ENCODE measurements at regions of chr1 and their contacts with region 1.

Region 1: DNA sequence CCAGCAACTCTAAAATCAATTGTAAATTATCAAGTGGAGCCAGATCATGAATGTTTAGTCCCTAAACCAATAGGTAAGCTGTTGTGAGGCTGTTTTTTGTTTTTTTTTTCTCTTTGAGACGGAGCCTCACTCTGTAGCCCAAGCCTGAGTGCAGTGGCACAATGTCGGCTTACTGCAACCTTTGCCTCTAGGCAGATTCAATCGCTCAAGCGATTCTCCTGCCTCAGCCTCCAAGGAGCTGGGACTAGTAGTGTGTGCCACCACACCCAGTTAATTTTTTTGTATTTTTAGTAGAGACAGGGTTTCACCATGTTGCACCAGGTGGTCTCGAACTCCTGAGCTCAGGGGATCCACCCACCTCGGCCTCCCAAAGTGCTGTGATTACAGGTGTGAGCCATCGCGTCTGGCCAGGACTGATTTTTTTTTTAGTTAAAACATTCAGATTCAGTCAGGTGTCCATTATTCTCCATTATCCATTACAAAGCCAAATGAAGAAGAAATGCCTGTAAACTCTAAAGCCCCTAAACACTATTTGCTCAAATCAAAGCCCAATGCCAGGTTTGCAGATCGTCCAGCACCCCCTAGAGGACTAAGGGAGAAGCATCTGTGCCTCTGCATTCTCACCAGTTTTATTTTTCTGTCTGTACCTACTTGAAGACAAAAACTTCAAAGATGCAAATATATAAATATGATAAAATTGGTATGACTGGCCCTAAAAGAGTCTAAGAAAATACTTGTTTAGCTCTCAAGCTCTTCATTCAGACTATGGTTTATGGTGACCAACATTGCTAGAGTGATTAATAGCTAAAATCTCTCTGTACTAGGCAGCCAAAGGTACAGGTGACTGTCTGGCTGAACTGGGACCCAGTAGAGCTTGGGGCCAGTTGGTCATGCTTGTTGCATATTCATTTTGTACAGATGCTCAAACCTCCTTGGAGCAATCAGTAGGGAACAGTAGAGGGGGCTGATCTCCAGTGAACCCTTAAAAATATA is 138.6 kb downstream of the SYT2 start:
- DNase-seq: no peak
- ATAC-seq: no peak

Region 2: DNA sequence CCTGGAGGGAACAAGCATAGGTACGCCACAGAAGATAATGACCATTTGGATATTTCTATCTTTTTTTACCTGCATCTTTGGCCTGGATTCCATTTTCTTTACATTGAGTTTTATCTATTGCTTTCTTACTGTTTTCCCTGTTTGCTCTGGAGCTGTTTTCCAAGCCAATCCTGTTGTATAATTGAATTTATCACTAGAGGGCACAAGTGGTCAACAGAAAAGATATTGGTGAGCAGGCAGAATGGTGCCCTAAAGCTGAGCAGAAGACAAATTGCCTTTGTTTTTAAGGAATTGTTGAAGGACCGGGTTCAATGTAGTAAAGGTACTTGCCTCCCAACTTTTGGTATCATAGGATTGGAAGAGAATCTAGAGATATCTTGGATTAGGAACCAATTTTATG is 70.4 kb before region 1 on chr1:
- intact Hi-C with region 1: loop called (anchors 10 kb)
- DNase-seq: no peak
- ATAC-seq: peak in 1 of 2 donors; percentile 20

Measured in left cardiac atrium (tissue), 4 donors.